ENCODE measurements at regions of chr11 and their contacts with region 1.

Region 1: GRCh38 chr11:86688398-86689179 is 16.2 kb upstream of the ME3 start:
- DNase-seq: peak; percentile 70
- H3K4me3 Mint-ChIP-seq: no peak overlapping the region
- H3K27ac Mint-ChIP-seq: peak overlapping the region; percentile 90
- H3K4me1 Mint-ChIP-seq: peaks cover 27% of the 10 kb centered on the region
- H3K27me3 Mint-ChIP-seq: peaks cover 2% of the 10 kb centered on the region

Region 2: GRCh38 chr11:86678296-86678695 is 10.3 kb before region 1 on chr11:
- CTCF ChIA-PET with region 1: no interaction called
- intact Hi-C with region 1: no loop called
- DNase-seq: no peak
- H3K4me3 Mint-ChIP-seq: no peak overlapping the region
- H3K27ac Mint-ChIP-seq: no peak overlapping the region
- H3K4me1 Mint-ChIP-seq: peaks cover under 1% of the 10 kb centered on the region
- H3K27me3 Mint-ChIP-seq: peaks cover 6% of the 10 kb centered on the region

Region 3: GRCh38 chr11:86740709-86741483 is 52.3 kb after region 1 on chr11:
- CTCF ChIA-PET with region 1: no interaction called
- intact Hi-C with region 1: loop called (anchors 1 kb)
- DNase-seq: peak; percentile 26
- H3K4me3 Mint-ChIP-seq: no peak overlapping the region
- H3K27ac Mint-ChIP-seq: no peak overlapping the region
- H3K4me1 Mint-ChIP-seq: peaks cover 11% of the 10 kb centered on the region
- H3K27me3 Mint-ChIP-seq: peaks cover 10% of the 10 kb centered on the region

Measured in activated naive CD4-positive, alpha-beta T cell treated with anti-CD3 and anti-CD28 coated beads for 36 hours (primary cell).